ENCODE measurements at regions of chr7 and their contacts with region 1.

Region 1: DNA sequence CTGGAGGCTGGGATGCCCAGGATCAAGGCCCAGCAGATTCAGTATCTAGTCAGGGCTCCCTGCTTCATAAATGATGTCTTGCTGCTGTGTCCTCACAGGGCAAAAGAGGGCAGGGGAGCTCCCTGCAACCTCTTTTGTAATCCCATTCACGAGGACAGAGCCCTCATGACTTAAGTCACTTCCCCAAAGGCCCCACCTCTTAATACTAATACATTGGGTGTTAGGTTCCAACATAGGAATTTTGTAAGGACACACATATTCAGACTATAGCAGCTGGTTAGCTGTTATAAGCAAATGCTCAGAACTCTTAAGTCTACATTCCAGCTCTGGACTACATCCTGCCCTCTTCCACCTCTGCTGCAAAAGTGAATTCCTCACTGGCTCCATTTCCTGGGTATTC is 63.0 kb downstream of the VOPP1 start:
- DNase-seq: no peak
- H3K4me3 Mint-ChIP-seq: no peak overlapping the region
- H3K27ac Mint-ChIP-seq: peak overlapping the region; percentile 67
- H3K4me1 Mint-ChIP-seq: peaks cover 51% of the 10 kb centered on the region
- H3K27me3 Mint-ChIP-seq: no peaks in the 10 kb centered on the region

Region 2: GRCh38 chr7:55484241-55484640 is 25.1 kb before region 1 on chr7:
- intact Hi-C with region 1: loop called (anchors 2 kb)
- DNase-seq: no peak
- H3K4me3 Mint-ChIP-seq: peak overlapping the region; percentile 42
- H3K27ac Mint-ChIP-seq: peak overlapping the region; percentile 31
- H3K4me1 Mint-ChIP-seq: peaks cover 53% of the 10 kb centered on the region
- H3K27me3 Mint-ChIP-seq: no peaks in the 10 kb centered on the region

Region 3: DNA sequence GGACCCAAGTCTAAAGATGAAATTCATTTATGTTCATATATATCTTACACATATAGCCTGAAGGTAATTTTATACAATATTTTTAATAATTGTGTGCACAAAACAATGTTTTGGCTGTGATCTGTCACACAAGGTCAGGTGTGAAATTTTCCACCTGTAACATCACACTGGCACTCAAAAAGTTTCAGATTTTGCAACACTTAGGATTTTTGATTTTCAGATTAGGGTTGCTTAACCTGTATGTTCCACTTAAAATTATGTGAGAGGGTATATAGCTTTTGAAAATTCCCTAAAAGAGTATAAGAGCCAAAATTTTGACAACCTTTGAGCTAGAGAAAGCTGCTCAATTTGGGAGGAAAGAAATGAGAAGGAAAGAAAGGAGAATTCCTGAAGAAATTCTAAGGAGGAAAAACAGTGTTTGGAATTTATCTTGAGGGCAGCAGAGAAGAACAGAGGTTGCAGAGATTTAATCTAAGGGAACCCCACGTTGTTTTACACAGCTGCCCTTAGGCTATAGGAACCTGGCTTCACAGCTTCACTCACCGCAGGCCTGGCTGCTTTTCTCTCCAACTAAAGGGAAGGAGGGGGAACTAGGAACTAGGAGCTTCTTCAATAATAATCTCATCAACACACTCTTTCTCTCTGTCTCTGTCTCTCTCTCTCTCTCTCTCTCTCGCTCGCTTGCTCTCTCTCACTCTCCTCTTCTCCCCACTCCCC is 54.4 kb after region 1 on chr7:
- intact Hi-C with region 1: no loop called
- DNase-seq: no peak
- H3K4me3 Mint-ChIP-seq: no peak overlapping the region
- H3K27ac Mint-ChIP-seq: peak overlapping the region; percentile 10
- H3K4me1 Mint-ChIP-seq: peaks cover 70% of the 10 kb centered on the region
- H3K27me3 Mint-ChIP-seq: no peaks in the 10 kb centered on the region

Measured in activated CD4-positive, alpha-beta T cell treated with anti-CD3 and anti-CD28 coated beads, Interleukin-2, amount 10 ng/mL, durations not matched to agents 24 days and 14 days (primary cell).